Activated naive CD8-positive, alpha-beta T cell treated with anti-CD3 and anti-CD28 coated beads, Interleukin-2, amount 10 ng/mL, durations not matched to agents 7 days and 5 days (primary cell): ENCODE measurements at regions of chr11 and their contacts with region 1.

Region 1: GRCh38 chr11:122655527-122656072 is at the start of gene UBASH3B:
- DNase-seq: peak; percentile 77
- ATAC-seq: peak; percentile 76
- H3K4me3 Mint-ChIP-seq: peak within 1 kb of the TSS; percentile 90
- H3K27ac Mint-ChIP-seq: peak within 1 kb of the TSS; percentile 88
- H3K4me1 Mint-ChIP-seq: peaks cover 35% of the 10 kb centered on the region
- H3K27me3 Mint-ChIP-seq: peaks cover 18% of the 10 kb centered on the region
- total RNA-seq, gene UBASH3B: 40.7 to 44.8 TPM

Region 2: GRCh38 chr11:122668562-122669090 is 13.0 kb after region 1 on chr11:
- POLR2A ChIA-PET with region 1: interaction called, 30 read pairs
- DNase-seq: no peak
- ATAC-seq: peak; percentile 80
- H3K4me3 Mint-ChIP-seq: peak overlapping the region; percentile 77
- H3K27ac Mint-ChIP-seq: peak overlapping the region; percentile 91
- H3K4me1 Mint-ChIP-seq: peaks cover 47% of the 10 kb centered on the region
- H3K27me3 Mint-ChIP-seq: no peaks in the 10 kb centered on the region

Region 3: GRCh38 chr11:122690801-122691548 is 35.4 kb after region 1 on chr11:
- POLR2A ChIA-PET with region 1: interaction called, 10 read pairs
- DNase-seq: no peak
- ATAC-seq: peak; percentile 53
- H3K4me3 Mint-ChIP-seq: peak overlapping the region; percentile 77
- H3K27ac Mint-ChIP-seq: peak overlapping the region; percentile 88
- H3K4me1 Mint-ChIP-seq: peaks cover 44% of the 10 kb centered on the region
- H3K27me3 Mint-ChIP-seq: no peaks in the 10 kb centered on the region

Region 4: DNA sequence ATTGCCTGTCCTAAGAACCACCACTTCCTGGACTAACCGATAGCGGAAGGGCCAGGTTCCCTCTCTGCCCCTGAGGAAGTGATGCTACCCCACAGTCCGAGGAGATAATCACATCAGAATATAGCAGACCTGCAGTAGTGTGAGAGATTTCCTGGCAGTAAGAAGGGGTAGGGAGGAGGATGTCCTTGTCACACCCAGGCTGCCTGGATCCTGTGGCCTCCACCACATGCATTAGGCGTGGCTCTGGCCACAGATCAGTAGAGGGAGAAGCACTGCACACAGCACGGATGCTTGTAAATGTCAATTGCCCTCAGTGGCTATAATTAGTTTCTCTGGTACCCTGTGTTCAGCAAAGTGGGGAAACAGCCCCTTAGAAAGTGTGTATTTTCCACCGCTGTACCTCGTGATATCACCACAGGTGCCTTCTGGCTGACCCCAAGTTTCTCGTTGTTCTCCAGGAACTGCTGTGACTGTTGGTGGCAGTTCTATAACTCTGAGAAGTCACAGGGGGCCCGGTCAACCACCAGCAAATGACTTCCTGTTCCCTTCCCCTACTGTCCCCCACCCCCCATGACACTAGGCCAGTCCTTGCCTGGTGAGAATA is 61.8 kb after region 1 on chr11:
- POLR2A ChIA-PET with region 1: interaction called, 14 read pairs
- DNase-seq: peak; percentile 72
- ATAC-seq: peak; percentile 87
- H3K4me3 Mint-ChIP-seq: peak overlapping the region; percentile 69
- H3K27ac Mint-ChIP-seq: peak overlapping the region; percentile 79
- H3K4me1 Mint-ChIP-seq: peaks cover 80% of the 10 kb centered on the region
- H3K27me3 Mint-ChIP-seq: no peaks in the 10 kb centered on the region

Region 5: DNA sequence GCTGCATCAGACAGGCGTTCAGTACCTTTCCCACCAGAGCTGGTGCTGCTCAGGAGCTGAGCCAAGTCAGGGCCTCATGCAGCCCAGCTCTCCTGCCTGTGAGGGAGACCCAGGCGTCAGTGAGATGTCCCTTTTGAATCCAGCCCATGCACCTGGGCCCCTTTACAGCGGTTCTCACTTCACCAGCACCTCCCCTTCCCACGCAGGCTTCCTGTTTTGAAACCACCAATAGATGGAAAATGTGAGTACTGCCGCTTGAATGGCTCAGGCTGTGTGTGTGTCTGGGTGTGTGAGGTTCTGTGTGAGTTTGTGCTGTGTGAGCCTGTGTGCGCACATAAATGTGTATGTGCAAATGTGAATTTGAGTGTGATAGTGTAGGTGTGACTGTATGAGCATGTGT is 88.3 kb after region 1 on chr11:
- POLR2A ChIA-PET with region 1: interaction called, 13 read pairs
- DNase-seq: peak; percentile 70
- ATAC-seq: peak; percentile 67
- H3K4me3 Mint-ChIP-seq: no peak overlapping the region
- H3K27ac Mint-ChIP-seq: no peak overlapping the region
- H3K4me1 Mint-ChIP-seq: peaks cover 48% of the 10 kb centered on the region
- H3K27me3 Mint-ChIP-seq: no peaks in the 10 kb centered on the region